Mammary epithelial cell (primary cell): ENCODE measurements at regions of chr1 and their contacts with region 1.

Region 1: GRCh38 chr1:53959664-53960250 is 13.6 kb downstream of the LRRC42 start:
- DNase-seq: peak; percentile 17
- H3K4me3 ChIP-seq: no peak overlapping the region
- H3K27ac ChIP-seq: no peak overlapping the region
- H3K4me1 ChIP-seq: peaks cover 27% of the 10 kb centered on the region
- H3K27me3 ChIP-seq: no peaks in the 10 kb centered on the region
- CTCF ChIP-seq: peak; percentile 50 to 65

Region 2: GRCh38 chr1:53860967-53861411 is 98.8 kb before region 1 on chr1:
- CTCF ChIA-PET with region 1: interaction called, 9 read pairs
- dilution Hi-C with region 1: no loop called
- in situ Hi-C with region 1: no loop called
- intact Hi-C with region 1: loop called (anchors 1 kb)
- DNase-seq: peak; percentile 30
- H3K4me3 ChIP-seq: no peak overlapping the region
- H3K27ac ChIP-seq: no peak overlapping the region
- H3K4me1 ChIP-seq: no peaks in the 10 kb centered on the region
- H3K27me3 ChIP-seq: no peaks in the 10 kb centered on the region
- CTCF ChIP-seq: peak; percentile 72 to 85

Region 3: DNA sequence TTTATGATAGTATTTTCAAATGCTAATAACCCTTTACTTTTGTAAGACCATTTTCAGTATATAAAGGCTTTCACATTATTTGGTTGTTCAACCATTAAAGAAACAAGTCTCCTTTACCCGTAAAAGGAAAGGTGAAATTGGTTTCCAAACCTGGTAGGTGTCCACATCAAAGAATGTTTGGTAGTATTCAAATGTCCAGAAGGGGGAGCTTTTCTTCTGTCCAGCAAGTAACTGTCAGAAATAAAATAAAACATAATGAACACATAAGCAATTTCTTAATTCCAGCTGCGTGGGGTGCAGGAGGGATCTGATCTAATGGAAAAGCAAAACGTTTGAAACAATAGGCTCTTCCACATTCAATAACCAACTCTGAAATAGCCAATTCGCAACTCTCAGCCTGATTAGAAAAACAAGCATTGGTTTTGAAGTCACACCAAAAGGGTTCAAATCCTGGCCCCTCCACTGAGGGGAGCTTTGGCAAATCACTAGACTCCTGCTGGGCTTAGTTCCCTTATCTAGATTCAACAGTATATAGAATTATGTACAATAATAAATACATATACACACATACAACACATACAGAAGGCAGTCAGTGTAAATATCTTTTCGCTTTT is 81.2 kb before region 1 on chr1:
- CTCF ChIA-PET with region 1: interaction called, 3 read pairs
- dilution Hi-C with region 1: no loop called
- in situ Hi-C with region 1: loop called (anchors 5 to 10 kb)
- intact Hi-C with region 1: loop called (anchors 1 kb)
- DNase-seq: peak; percentile 44
- H3K4me3 ChIP-seq: no peak overlapping the region
- H3K27ac ChIP-seq: no peak overlapping the region
- H3K4me1 ChIP-seq: no peaks in the 10 kb centered on the region
- H3K27me3 ChIP-seq: no peaks in the 10 kb centered on the region
- CTCF ChIP-seq: peak; percentile 47 to 62

Region 4: DNA sequence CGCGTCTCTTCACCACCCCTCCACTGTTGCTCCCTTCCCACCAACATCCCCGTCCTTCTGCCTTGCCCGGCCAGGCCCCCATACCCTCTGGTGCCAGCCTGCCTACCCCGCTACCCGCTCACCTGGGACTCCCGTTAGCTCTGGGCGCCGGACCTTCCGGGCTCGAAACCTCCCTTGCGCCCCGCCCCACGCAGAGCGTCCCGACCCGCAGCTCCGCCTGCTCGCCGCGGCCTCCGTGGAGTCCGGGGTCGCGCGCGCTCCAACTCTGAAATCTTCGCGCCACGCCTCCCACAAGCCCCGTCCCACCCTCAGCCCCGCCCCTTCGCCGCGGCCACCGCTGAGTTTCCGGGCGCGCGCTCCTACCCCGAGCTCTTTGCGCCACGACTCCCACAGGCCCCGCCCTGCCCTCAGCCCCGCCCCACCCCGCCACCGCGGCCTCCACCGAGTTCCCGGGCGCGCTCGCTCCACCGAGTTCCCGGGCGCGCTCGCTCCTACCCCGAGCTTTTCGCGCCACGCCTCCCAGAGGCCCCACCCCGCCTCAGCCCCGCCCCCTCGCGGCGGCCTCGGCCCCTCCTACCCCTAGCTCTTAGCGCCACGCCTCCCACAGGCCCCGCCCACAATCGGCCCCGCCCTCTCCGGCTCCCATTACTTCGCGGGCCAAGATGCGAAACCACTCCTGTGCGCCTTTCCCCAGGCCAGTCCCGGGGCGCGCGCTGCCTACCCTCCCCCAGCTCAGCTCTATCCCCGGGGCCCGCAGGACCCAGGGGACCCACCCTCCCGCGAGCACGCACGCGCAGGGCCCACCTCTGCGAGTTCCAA is 14.1 kb before region 1 on chr1 and contains the start of gene IFT25:
- CTCF ChIA-PET with region 1: interaction called, 20 read pairs
- dilution Hi-C with region 1: no loop called
- in situ Hi-C with region 1: no loop called
- intact Hi-C with region 1: loop called (anchors 1 kb)
- DNase-seq: peak; percentile 95
- H3K4me3 ChIP-seq: peak within 1 kb of the TSS; percentile 90 to 99 (median 96)
- H3K27ac ChIP-seq: peak within 1 kb of the TSS; percentile 84
- H3K4me1 ChIP-seq: peaks cover 24% of the 10 kb centered on the region
- H3K27me3 ChIP-seq: no peaks in the 10 kb centered on the region
- CTCF ChIP-seq: no peak
- total RNA-seq, gene IFT25: 14.3 to 33.7 TPM